ENCODE measurements at regions of chr6 and their contacts with region 1.

Region 1: DNA sequence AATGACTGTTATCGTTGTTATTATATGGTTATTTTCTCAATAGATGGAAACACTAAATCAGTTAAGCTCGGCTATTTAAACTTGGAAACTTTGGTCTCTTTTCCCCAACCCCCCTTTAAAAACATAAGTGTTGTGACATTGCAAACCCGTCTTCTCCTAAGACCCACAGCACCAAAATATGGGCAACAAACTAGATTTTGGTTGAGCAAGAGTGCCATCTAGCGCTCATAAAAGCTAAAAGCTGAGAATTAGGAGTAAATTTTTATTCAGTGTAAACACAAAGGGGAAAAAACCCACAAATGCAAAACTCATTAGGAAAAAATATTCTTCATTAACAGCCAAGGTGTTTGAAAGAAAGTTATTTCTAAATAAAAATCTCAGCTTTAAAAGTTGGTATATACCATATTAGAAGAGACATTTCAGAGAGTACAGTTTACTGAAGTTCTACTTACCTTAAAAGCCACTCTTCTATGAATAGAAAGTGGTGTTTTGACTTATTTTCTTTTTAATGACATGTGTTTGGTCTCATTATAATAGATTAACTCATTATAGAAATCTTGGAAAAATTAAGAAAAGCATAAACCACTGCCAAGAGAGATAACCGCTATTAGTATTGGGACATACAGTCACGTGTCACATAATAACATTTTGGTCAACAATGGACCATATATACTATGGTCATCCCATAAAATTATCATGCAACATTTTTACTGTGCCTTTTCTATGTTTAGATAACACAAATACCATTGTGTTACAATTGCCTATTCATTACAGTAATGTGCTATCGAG is 21.1 kb downstream of the SESN1 start:
- DNase-seq: peak; percentile 39
- CTCF ChIP-seq: peak; percentile 61

Region 2: GRCh38 chr6:108916026-108916676 is 157.4 kb before region 1 on chr6:
- CTCF ChIA-PET with region 1: interaction called, 12 read pairs
- POLR2A ChIA-PET with region 1: no interaction called
- DNase-seq: no peak
- CTCF ChIP-seq: no peak

Region 3: GRCh38 chr6:109103942-109104341 is 30.4 kb after region 1 on chr6:
- CTCF ChIA-PET with region 1: no interaction called
- POLR2A ChIA-PET with region 1: no interaction called
- DNase-seq: no peak
- CTCF ChIP-seq: no peak